ENCODE measurements at regions of chr3 and their contacts with region 1.

Region 1: GRCh38 chr3:71397046-71397445 is 186.5 kb downstream of the FOXP1 start:
- DNase-seq: no peak
- ATAC-seq: no peak
- H3K4me3 Mint-ChIP-seq: no peak overlapping the region
- H3K27ac Mint-ChIP-seq: no peak overlapping the region
- H3K4me1 Mint-ChIP-seq: peaks cover 50% of the 10 kb centered on the region
- H3K27me3 Mint-ChIP-seq: no peaks in the 10 kb centered on the region

Region 2: DNA sequence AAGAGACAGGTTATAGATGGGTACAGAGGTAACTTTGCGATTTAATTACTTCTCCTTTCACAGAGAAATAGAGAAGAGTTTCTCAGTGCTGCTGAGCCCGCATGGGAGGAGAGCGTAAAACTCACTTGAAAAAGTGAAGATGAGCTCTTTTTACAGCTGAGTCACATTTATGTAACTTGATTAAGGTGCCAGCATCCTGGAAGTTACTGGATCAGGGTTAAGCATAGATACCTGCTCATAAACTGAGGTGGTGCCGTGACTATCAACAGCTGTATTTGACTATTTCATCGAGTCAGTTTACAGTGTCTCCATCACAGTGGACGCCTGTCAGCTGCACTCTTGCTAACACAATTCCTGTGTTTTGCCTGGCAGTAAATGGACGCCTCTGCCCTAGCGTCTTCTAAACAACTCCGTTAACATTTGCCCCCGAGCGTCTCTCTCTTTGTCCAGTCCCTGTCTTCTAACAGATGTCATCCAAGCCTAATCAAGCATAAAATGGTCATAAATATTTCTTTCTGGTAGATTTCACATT is 228.1 kb before region 1 on chr3:
- CTCF ChIA-PET with region 1: no interaction called
- POLR2A ChIA-PET with region 1: no interaction called
- DNase-seq: no peak
- ATAC-seq: no peak
- H3K4me3 Mint-ChIP-seq: no peak overlapping the region
- H3K27ac Mint-ChIP-seq: no peak overlapping the region
- H3K4me1 Mint-ChIP-seq: no peaks in the 10 kb centered on the region
- H3K27me3 Mint-ChIP-seq: no peaks in the 10 kb centered on the region

Region 3: GRCh38 chr3:71305231-71306206 is 91.5 kb before region 1 on chr3:
- CTCF ChIA-PET with region 1: interaction called, 14 read pairs
- POLR2A ChIA-PET with region 1: no interaction called
- DNase-seq: peak; percentile 46
- ATAC-seq: peak; percentile 38
- H3K4me3 Mint-ChIP-seq: peak overlapping the region; percentile 89
- H3K27ac Mint-ChIP-seq: peak overlapping the region; percentile 92
- H3K4me1 Mint-ChIP-seq: peaks cover 80% of the 10 kb centered on the region
- H3K27me3 Mint-ChIP-seq: no peaks in the 10 kb centered on the region

Region 4: GRCh38 chr3:71409352-71409751 is 12.3 kb after region 1 on chr3:
- CTCF ChIA-PET with region 1: interaction called, 18 read pairs
- POLR2A ChIA-PET with region 1: interaction called, 3 read pairs
- DNase-seq: no peak
- ATAC-seq: no peak
- H3K4me3 Mint-ChIP-seq: no peak overlapping the region
- H3K27ac Mint-ChIP-seq: no peak overlapping the region
- H3K4me1 Mint-ChIP-seq: peaks cover 8% of the 10 kb centered on the region
- H3K27me3 Mint-ChIP-seq: no peaks in the 10 kb centered on the region

Region 5: GRCh38 chr3:71423151-71423906 is 26.3 kb after region 1 on chr3:
- CTCF ChIA-PET with region 1: interaction called, 26 read pairs
- POLR2A ChIA-PET with region 1: interaction called, 3 read pairs
- DNase-seq: no peak
- ATAC-seq: no peak
- H3K4me3 Mint-ChIP-seq: no peak overlapping the region
- H3K27ac Mint-ChIP-seq: peak overlapping the region; percentile 89
- H3K4me1 Mint-ChIP-seq: peaks cover 78% of the 10 kb centered on the region
- H3K27me3 Mint-ChIP-seq: no peaks in the 10 kb centered on the region